PC-3 (cell line): ENCODE measurements at regions of chr17 and their contacts with region 1.

Region 1: GRCh38 chr17:4215882-4216570 is 47.8 kb downstream of the ANKFY1 start:
- DNase-seq: no peak
- ATAC-seq: no peak; the same call in 1 of the 2 replicates
- H3K4me3 ChIP-seq: no peak overlapping the region
- H3K27ac ChIP-seq: no peak overlapping the region
- H3K4me1 ChIP-seq: no peaks in the 10 kb centered on the region
- H3K27me3 ChIP-seq: no peaks in the 10 kb centered on the region
- CTCF ChIP-seq: no peak

Region 2: GRCh38 chr17:4249452-4250029 is 33.5 kb after region 1 on chr17:
- CTCF ChIA-PET with region 1: interaction called, 4 read pairs
- POLR2A ChIA-PET with region 1: no interaction called
- intact Hi-C with region 1: loop called (anchors 2 kb)
- DNase-seq: peak; percentile 43
- ATAC-seq: peak; percentile 42
- H3K4me3 ChIP-seq: no peak overlapping the region
- H3K27ac ChIP-seq: no peak overlapping the region
- H3K4me1 ChIP-seq: peaks cover 21% of the 10 kb centered on the region
- H3K27me3 ChIP-seq: no peaks in the 10 kb centered on the region
- CTCF ChIP-seq: peak; percentile 45; the same call in 1 of the 2 replicates

Region 3: GRCh38 chr17:4304417-4305027 is 88.5 kb after region 1 on chr17:
- CTCF ChIA-PET with region 1: no interaction called
- POLR2A ChIA-PET with region 1: no interaction called
- intact Hi-C with region 1: loop called (anchors 1 kb)
- DNase-seq: peak; percentile 60
- ATAC-seq: peak; percentile 58; the same call in 1 of the 2 replicates
- H3K4me3 ChIP-seq: no peak overlapping the region
- H3K27ac ChIP-seq: no peak overlapping the region
- H3K4me1 ChIP-seq: no peaks in the 10 kb centered on the region
- H3K27me3 ChIP-seq: no peaks in the 10 kb centered on the region
- CTCF ChIP-seq: peak; percentile 69

Region 4: DNA sequence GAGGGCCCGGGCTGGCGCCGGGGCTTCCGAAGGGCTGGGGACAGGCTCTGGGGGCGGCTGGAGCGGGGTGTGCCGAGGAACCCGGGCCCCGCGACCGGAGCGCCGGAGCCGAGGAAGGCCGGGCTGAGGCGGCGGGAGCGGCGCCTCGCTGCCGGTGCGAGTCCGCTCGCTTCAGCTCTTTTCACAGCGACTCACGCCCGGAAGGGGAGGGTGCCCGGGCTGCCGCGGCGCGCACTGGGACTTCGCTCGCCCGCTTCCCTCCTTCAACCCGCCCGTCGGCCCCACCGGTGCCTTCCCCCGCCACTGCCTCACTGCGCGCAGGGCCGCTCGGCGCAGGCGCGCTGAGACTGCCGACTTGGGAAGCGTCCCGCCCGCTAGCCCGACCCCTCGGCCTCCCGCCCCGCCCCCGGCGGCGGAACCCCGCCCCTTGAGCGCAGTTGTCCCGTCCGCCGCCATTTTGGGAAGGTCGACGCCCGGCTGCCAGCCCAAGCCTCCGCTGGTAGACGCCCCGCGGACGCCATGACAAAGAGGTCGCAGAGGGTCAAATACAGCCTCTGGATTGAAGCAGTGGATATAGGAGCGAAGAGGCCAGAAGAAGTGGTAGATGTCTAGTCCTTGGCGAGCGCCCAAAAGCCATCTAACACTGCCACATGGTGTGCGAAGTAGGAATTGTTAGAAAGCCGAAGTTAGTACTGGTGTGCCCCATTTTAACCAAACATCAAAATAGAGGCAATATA is 150.5 kb after region 1 on chr17 and contains the start of gene UBE2G1:
- CTCF ChIA-PET with region 1: no interaction called
- POLR2A ChIA-PET with region 1: no interaction called
- intact Hi-C with region 1: loop called (anchors 5 kb)
- DNase-seq: peak; percentile 94
- ATAC-seq: peak; percentile 77
- H3K4me3 ChIP-seq: peak within 1 kb of the TSS; percentile 84
- H3K27ac ChIP-seq: peak within 1 kb of the TSS; percentile 71
- H3K4me1 ChIP-seq: no peaks in the 10 kb centered on the region; the same call in 1 of the 2 replicates
- H3K27me3 ChIP-seq: no peaks in the 10 kb centered on the region
- CTCF ChIP-seq: peak; percentile 22; the same call in 1 of the 2 replicates
- total RNA-seq, gene UBE2G1: 35.8 and 46.8 TPM in 2 replicates

Region 5: GRCh38 chr17:4412933-4413831 is 197.2 kb after region 1 on chr17:
- CTCF ChIA-PET with region 1: no interaction called
- POLR2A ChIA-PET with region 1: no interaction called
- intact Hi-C with region 1: loop called (anchors 1 kb)
- DNase-seq: peak; percentile 85
- ATAC-seq: peak; percentile 98
- H3K4me3 ChIP-seq: peak overlapping the region; percentile 38; the same call in 1 of the 2 replicates
- H3K27ac ChIP-seq: no peak overlapping the region
- H3K4me1 ChIP-seq: no peaks in the 10 kb centered on the region; the same call in 1 of the 2 replicates
- H3K27me3 ChIP-seq: no peaks in the 10 kb centered on the region
- CTCF ChIP-seq: peak; percentile 77

Region 6: GRCh38 chr17:4463818-4464476 is 247.9 kb after region 1 on chr17:
- CTCF ChIA-PET with region 1: no interaction called
- POLR2A ChIA-PET with region 1: no interaction called
- intact Hi-C with region 1: no loop called
- DNase-seq: no peak
- ATAC-seq: no peak
- H3K4me3 ChIP-seq: no peak overlapping the region
- H3K27ac ChIP-seq: no peak overlapping the region
- H3K4me1 ChIP-seq: no peaks in the 10 kb centered on the region
- H3K27me3 ChIP-seq: no peaks in the 10 kb centered on the region
- CTCF ChIP-seq: no peak